CD4-positive, alpha-beta T cell (primary cell): ENCODE measurements at regions of chr5 and their contacts with region 1.

Region 1: GRCh38 chr5:115579747-115580173 is 22.5 kb downstream of the TICAM2 start:
- DNase-seq: no peak
- ATAC-seq: no peak
- H3K4me3 ChIP-seq: no peak overlapping the region
- H3K4me3 Mint-ChIP-seq: no peak overlapping the region
- H3K27ac ChIP-seq: no peak overlapping the region
- H3K27ac Mint-ChIP-seq: no peak overlapping the region
- H3K4me1 ChIP-seq: no peaks in the 10 kb centered on the region
- H3K4me1 Mint-ChIP-seq: no peaks in the 10 kb centered on the region
- H3K27me3 ChIP-seq: no peaks in the 10 kb centered on the region
- H3K27me3 Mint-ChIP-seq: no peaks in the 10 kb centered on the region
- CTCF ChIP-seq: no peak

Region 2: GRCh38 chr5:115309751-115310370 is 269.9 kb before region 1 on chr5:
- CTCF ChIA-PET with region 1: interaction called, 25 read pairs
- POLR2A ChIA-PET with region 1: interaction called, 7 read pairs
- intact Hi-C with region 1: loop called (anchors 1 kb)
- DNase-seq: peak in 3 of 14 experiments; percentile 61 to 68 (median 66)
- ATAC-seq: peak; percentile 52
- H3K4me3 ChIP-seq: no peak overlapping the region
- H3K4me3 Mint-ChIP-seq: no peak overlapping the region
- H3K27ac ChIP-seq: no peak overlapping the region
- H3K27ac Mint-ChIP-seq: no peak overlapping the region
- H3K4me1 ChIP-seq: no peaks in the 10 kb centered on the region
- H3K4me1 Mint-ChIP-seq: no peaks in the 10 kb centered on the region
- H3K27me3 ChIP-seq: peaks cover 4 to 14% of the 10 kb centered on the region in 2 experiments
- H3K27me3 Mint-ChIP-seq: peaks cover 48% of the 10 kb centered on the region
- CTCF ChIP-seq: peak; percentile 83

Region 3: DNA sequence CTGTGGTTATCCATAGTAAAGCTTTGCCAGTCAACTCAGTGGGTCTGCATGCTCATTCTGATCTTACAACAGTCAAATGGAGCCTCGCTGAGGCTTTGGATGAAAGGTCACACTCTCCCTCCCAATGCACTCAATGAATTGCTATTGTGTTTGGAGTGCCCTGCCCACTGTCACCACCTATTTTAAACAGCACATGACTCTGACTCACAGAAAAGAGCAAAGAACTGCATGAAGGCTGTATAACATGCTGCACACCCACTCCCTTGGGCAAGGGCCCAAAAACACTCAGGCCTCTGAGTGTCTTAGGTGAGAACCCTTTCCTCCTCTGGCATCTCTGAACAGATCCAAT is 164.6 kb before region 1 on chr5:
- CTCF ChIA-PET with region 1: no interaction called
- POLR2A ChIA-PET with region 1: no interaction called
- intact Hi-C with region 1: no loop called
- DNase-seq: no peak
- ATAC-seq: no peak
- H3K4me3 ChIP-seq: no peak overlapping the region
- H3K4me3 Mint-ChIP-seq: no peak overlapping the region
- H3K27ac ChIP-seq: no peak overlapping the region
- H3K27ac Mint-ChIP-seq: no peak overlapping the region
- H3K4me1 ChIP-seq: no peaks in the 10 kb centered on the region
- H3K4me1 Mint-ChIP-seq: no peaks in the 10 kb centered on the region
- H3K27me3 ChIP-seq: peaks cover 3 to 4% of the 10 kb centered on the region in 2 experiments
- H3K27me3 Mint-ChIP-seq: peaks cover 14% of the 10 kb centered on the region
- CTCF ChIP-seq: no peak

Region 4: DNA sequence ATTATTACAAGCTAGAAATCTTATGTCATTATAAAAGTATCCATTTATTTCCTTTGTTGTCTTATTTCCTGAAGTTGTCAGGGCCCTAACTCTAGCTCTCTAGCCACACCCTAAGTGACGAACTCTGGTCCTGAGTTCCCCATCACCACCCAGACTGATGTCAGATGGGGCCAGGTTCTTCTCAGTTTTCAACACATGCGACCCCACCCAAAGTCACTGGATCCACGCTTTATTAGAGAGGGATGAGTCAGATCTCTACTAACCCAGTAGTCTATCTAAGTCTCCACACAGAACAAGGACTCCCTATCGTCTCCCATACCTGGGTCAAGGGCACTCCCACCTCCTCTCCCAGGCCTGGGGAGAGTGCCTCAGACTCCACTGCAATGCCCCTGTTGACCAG is 28.3 kb before region 1 on chr5:
- CTCF ChIA-PET with region 1: interaction called, 5 read pairs
- POLR2A ChIA-PET with region 1: no interaction called
- intact Hi-C with region 1: loop called in 1 of 2 experiments (anchors 2 kb)
- DNase-seq: peak in 3 of 14 experiments; percentile 18 to 55 (median 33)
- ATAC-seq: no peak
- H3K4me3 ChIP-seq: no peak overlapping the region
- H3K4me3 Mint-ChIP-seq: no peak overlapping the region
- H3K27ac ChIP-seq: no peak overlapping the region
- H3K27ac Mint-ChIP-seq: no peak overlapping the region
- H3K4me1 ChIP-seq: no peaks in the 10 kb centered on the region
- H3K4me1 Mint-ChIP-seq: peaks cover 5% of the 10 kb centered on the region
- H3K27me3 ChIP-seq: peaks cover 0 to 3% of the 10 kb centered on the region in 2 experiments
- H3K27me3 Mint-ChIP-seq: peaks cover 7% of the 10 kb centered on the region
- CTCF ChIP-seq: no peak

Region 5: DNA sequence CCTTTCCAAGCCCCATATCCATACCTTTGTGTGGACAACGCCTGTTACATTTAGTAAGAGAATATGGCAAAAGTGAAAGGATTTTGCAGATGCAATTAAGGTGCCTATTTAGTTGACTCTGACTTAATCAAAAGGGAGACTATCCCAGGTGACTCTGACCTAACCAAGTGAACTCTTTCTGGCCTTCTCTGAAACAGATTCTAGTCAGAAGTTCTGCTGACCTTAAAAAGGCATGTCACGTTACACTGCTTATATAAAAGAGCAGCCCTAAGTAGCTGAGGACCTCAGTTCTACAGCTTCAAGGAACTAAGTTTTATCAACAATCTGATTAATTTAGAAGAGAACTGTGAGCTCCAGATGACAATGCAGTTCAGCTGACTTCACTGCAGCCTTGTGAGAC is 28.2 kb after region 1 on chr5:
- CTCF ChIA-PET with region 1: no interaction called
- POLR2A ChIA-PET with region 1: no interaction called
- intact Hi-C with region 1: no loop called
- DNase-seq: no peak
- ATAC-seq: no peak
- H3K4me3 ChIP-seq: no peak overlapping the region
- H3K4me3 Mint-ChIP-seq: no peak overlapping the region
- H3K27ac ChIP-seq: no peak overlapping the region
- H3K27ac Mint-ChIP-seq: no peak overlapping the region
- H3K4me1 ChIP-seq: no peaks in the 10 kb centered on the region
- H3K4me1 Mint-ChIP-seq: peaks cover 29% of the 10 kb centered on the region
- H3K27me3 ChIP-seq: no peaks in the 10 kb centered on the region
- H3K27me3 Mint-ChIP-seq: no peaks in the 10 kb centered on the region
- CTCF ChIP-seq: no peak

Region 6: DNA sequence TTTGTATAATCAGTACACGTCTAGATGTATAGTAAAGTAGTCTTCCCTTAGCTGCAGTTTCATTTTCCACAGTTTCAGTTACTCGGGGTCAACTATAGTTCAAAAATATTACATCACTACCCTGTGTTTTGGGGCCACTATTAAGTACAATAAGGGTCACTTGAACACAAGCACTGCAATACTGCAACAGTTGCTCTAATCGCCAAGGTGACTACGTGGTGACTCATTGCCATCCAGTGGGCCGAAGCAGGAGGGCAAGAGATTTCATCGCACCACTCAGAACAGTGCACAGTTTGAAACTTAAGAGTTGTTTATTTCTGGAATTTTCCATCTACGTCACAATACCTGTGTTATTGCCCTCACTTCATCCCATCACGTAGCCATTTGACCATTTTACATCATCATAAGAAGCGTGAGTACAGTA is 452.3 kb after region 1 on chr5 and contains the start of gene ARL14EPL:
- CTCF ChIA-PET with region 1: no interaction called
- POLR2A ChIA-PET with region 1: no interaction called
- intact Hi-C with region 1: no loop called
- DNase-seq: peak in 2 of 14 experiments; percentile 29 to 42
- ATAC-seq: no peak
- H3K4me3 ChIP-seq: no peak within 1 kb of the TSS
- H3K4me3 Mint-ChIP-seq: no peak within 1 kb of the TSS
- H3K27ac ChIP-seq: no peak within 1 kb of the TSS
- H3K27ac Mint-ChIP-seq: no peak within 1 kb of the TSS
- H3K4me1 ChIP-seq: no peaks in the 10 kb centered on the region
- H3K4me1 Mint-ChIP-seq: no peaks in the 10 kb centered on the region
- H3K27me3 ChIP-seq: peaks cover 4 to 13% of the 10 kb centered on the region in 2 experiments
- H3K27me3 Mint-ChIP-seq: peaks cover 32% of the 10 kb centered on the region
- CTCF ChIP-seq: no peak
- total RNA-seq, gene ARL14EPL: not detected